ENCODE measurements at regions of chr22 and their contacts with region 1.

Region 1: GRCh38 chr22:29813563-29813962 is 24.5 kb downstream of the ASCC2 start:
- DNase-seq: no peak
- ATAC-seq: peak; percentile 68; the same call in 1 of the 2 replicates
- H3K4me3 ChIP-seq: no peak overlapping the region
- H3K27ac ChIP-seq: no peak overlapping the region
- H3K4me1 ChIP-seq: no peaks in the 10 kb centered on the region
- H3K27me3 ChIP-seq: no peaks in the 10 kb centered on the region
- CTCF ChIP-seq: no peak; the same call in 1 of the 2 replicates

Region 2: DNA sequence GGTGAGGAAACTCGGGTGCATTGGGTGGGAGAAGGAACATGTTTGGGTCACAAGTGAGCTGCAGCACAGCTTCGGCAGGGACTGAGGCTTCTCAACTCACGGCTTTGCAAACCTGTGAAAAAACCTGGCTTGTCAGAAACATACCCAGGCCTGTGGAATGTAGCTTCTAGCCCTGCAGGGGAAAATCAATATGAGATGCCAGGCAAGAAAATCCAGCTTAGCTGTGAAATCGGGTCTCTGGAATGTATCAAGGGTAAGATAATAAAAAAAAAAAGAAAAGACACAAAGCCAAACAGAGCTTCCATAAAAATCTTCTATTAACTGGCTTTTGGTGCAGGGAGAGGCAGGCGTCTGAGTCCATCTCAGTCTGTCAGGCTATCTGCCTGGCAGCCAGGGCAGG is 17.9 kb before region 1 on chr22:
- CTCF ChIA-PET with region 1: no interaction called
- POLR2A ChIA-PET with region 1: no interaction called
- in situ Hi-C with region 1: no loop called
- intact Hi-C with region 1: no loop called
- DNase-seq: no peak
- ATAC-seq: no peak
- H3K4me3 ChIP-seq: no peak overlapping the region
- H3K27ac ChIP-seq: no peak overlapping the region
- H3K4me1 ChIP-seq: no peaks in the 10 kb centered on the region
- H3K27me3 ChIP-seq: no peaks in the 10 kb centered on the region
- CTCF ChIP-seq: no peak

Region 3: GRCh38 chr22:30132290-30132996 is 318.9 kb after region 1 on chr22:
- CTCF ChIA-PET with region 1: no interaction called
- POLR2A ChIA-PET with region 1: interaction called, 13 read pairs
- in situ Hi-C with region 1: no loop called
- intact Hi-C with region 1: no loop called
- DNase-seq: no peak
- ATAC-seq: no peak
- H3K4me3 ChIP-seq: no peak overlapping the region
- H3K27ac ChIP-seq: no peak overlapping the region
- H3K4me1 ChIP-seq: no peaks in the 10 kb centered on the region
- H3K27me3 ChIP-seq: no peaks in the 10 kb centered on the region
- CTCF ChIP-seq: no peak

Measured in Panc1 (cell line).